ENCODE measurements at regions of chr18 and their contacts with region 1.

Region 1: DNA sequence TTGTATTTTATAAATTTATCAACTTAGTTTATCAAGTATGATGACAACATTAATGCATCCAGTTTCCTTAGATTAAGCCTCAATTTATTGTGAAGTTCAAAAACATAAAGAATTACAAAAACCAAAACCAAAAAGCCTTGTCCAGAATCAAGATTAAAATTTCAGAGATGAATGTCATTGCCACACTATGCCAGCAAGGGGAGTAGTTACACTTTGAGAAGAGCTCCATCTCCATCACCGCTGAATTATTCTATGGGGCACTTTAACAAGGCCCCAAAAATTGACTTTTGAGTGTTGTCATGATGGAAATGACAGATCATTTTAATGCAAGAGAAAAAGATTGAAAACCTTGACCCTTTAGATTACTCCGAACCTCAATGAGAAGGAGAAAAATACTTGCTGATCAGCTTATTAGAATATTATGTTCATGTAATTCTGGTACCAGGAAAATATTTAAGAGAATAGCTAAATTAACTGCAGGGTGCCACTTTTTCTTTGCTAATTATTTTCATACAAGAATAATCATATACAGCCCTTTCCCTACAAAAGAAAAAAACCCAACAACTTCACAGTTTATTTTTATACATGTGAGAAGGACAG is 152.5 kb upstream of the AQP4 start:
- DNase-seq: peak; percentile 46
- H3K4me3 Mint-ChIP-seq: no peak overlapping the region
- H3K27ac Mint-ChIP-seq: no peak overlapping the region
- H3K4me1 Mint-ChIP-seq: no peaks in the 10 kb centered on the region
- H3K27me3 Mint-ChIP-seq: no peaks in the 10 kb centered on the region
- CTCF ChIP-seq: peak; percentile 69

Region 2: DNA sequence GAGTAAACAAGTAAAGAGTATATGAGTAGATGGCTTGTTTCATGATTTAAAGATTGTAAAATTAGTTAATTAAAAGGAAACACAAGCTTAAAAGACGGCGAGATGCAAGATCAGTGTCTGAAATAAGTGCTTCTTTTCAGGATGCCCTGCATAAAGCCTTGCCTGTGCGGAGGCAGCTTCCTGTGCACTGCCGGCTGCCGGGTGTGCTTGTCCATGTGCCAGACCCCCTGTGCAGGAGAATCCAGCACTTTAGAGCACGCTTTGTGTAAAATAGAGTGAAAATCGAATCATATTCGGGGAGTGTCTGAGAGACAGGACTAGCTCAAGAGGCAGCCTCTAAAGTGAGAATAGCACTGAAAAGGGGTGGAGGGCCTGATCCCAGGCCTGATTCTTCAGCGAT is 12.4 kb after region 1 on chr18:
- CTCF ChIA-PET with region 1: interaction called, 10 read pairs
- POLR2A ChIA-PET with region 1: no interaction called
- intact Hi-C with region 1: no loop called
- DNase-seq: no peak
- H3K4me3 Mint-ChIP-seq: no peak overlapping the region
- H3K27ac Mint-ChIP-seq: no peak overlapping the region
- H3K4me1 Mint-ChIP-seq: no peaks in the 10 kb centered on the region
- H3K27me3 Mint-ChIP-seq: peaks cover 16% of the 10 kb centered on the region
- CTCF ChIP-seq: no peak

Region 3: GRCh38 chr18:27164905-27165304 is 146.9 kb after region 1 on chr18:
- CTCF ChIA-PET with region 1: no interaction called
- POLR2A ChIA-PET with region 1: no interaction called
- intact Hi-C with region 1: loop called (anchors 5 kb)
- DNase-seq: no peak
- H3K4me3 Mint-ChIP-seq: no peak overlapping the region
- H3K27ac Mint-ChIP-seq: no peak overlapping the region
- H3K4me1 Mint-ChIP-seq: no peaks in the 10 kb centered on the region
- H3K27me3 Mint-ChIP-seq: peaks cover 28% of the 10 kb centered on the region
- CTCF ChIP-seq: no peak

Region 4: DNA sequence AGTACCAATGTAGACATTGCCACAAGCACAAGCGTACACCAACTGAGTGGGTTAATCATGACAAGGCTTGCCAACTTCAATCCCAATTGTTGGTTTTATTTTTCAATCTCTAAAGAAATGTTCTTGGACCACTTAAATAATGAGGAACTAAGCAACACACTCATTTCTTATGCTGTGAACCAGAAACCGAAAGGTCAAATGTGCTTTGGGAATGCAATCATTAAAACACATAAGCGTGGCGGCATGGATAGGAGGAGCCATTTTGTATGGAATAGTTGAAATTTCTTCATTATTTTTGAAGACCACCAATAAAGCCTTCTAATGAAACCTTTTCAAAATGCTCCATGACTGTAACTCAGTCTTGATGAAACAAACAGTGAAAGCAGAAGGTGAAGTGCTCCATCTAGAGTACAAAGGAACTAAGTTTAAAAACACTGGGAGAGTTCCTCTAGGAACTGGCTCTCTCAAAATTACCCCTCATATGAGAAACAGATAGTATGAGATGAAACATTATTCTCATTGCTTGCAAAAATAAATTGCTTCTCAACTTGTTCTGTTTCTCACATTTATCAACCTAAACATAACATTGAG is 280.3 kb after region 1 on chr18:
- CTCF ChIA-PET with region 1: interaction called, 60 read pairs
- POLR2A ChIA-PET with region 1: no interaction called
- intact Hi-C with region 1: loop called (anchors 1 kb)
- DNase-seq: peak; percentile 38
- H3K4me3 Mint-ChIP-seq: no peak overlapping the region
- H3K27ac Mint-ChIP-seq: no peak overlapping the region
- H3K4me1 Mint-ChIP-seq: no peaks in the 10 kb centered on the region
- H3K27me3 Mint-ChIP-seq: no peaks in the 10 kb centered on the region
- CTCF ChIP-seq: peak; percentile 41

Region 5: GRCh38 chr18:27599202-27599829 is 581.3 kb after region 1 on chr18:
- CTCF ChIA-PET with region 1: interaction called, 17 read pairs
- POLR2A ChIA-PET with region 1: no interaction called
- intact Hi-C with region 1: loop called (anchors 1 kb)
- DNase-seq: peak; percentile 65
- H3K4me3 Mint-ChIP-seq: no peak overlapping the region
- H3K27ac Mint-ChIP-seq: no peak overlapping the region
- H3K4me1 Mint-ChIP-seq: peaks cover under 1% of the 10 kb centered on the region
- H3K27me3 Mint-ChIP-seq: peaks cover 3% of the 10 kb centered on the region
- CTCF ChIP-seq: peak; percentile 81

Region 6: GRCh38 chr18:27685807-27686412 is 667.9 kb after region 1 on chr18:
- CTCF ChIA-PET with region 1: no interaction called
- POLR2A ChIA-PET with region 1: no interaction called
- intact Hi-C with region 1: loop called (anchors 5 kb)
- DNase-seq: peak; percentile 48
- H3K4me3 Mint-ChIP-seq: no peak overlapping the region
- H3K27ac Mint-ChIP-seq: no peak overlapping the region
- H3K4me1 Mint-ChIP-seq: no peaks in the 10 kb centered on the region
- H3K27me3 Mint-ChIP-seq: no peaks in the 10 kb centered on the region
- CTCF ChIP-seq: peak; percentile 59